ENCODE measurements at regions of chr6 and their contacts with region 1.

Region 1: DNA sequence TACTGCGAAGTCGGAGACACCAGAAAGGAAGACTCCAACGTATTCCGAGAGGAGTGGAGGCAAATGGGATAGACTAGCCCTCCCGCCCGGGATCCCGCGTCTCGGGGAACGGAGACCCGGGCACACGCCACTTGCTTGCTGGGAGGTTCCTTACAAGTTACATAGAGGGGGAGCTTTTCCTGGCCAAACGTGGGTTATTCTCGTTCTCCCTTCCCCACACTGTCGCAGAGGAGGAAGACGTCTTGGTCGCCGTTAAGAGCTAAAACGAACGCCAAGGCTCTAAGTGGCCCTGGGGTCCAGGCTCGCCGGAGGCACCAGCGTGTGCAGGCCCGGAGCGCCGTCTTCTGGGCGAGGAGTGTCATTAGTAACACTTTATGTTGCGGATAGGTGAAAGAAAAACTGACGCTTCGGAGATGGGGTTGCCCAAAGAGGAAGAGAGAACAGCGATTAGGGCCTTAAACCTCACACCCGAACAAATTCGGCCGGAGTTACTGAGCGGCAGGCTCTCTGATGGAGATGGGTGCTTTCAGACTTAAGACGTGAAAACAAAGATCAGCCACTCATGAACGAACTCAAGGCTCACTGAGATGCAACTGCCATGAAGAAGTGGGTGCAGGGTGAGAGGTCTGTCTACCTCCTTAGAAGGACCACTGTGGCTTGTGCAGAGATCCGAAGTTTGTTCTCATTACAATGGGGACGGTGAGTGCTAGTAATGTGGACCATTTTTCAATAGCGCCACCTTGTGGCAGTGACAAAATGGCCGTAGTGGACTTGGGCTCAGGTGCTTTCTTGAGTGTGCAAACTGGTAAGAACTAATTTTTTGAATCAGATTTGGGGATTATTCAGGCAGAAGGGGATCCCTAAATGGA is 11.7 kb upstream of the ZNF311 start:
- DNase-seq: peak; percentile 46 to 83
- ATAC-seq: peak; percentile 93 to 94
- H3K4me3 ChIP-seq: peak overlapping the region; percentile 85
- H3K27ac ChIP-seq: peak overlapping the region; percentile 63 to 83
- H3K4me1 ChIP-seq: no peaks in the 10 kb centered on the region
- CTCF ChIP-seq: peak; percentile 67; the same call in 2 of the 3 replicates
- EP300 ChIP-seq: no peak
- POLR2A ChIP-seq: no peak
- RAD21 ChIP-seq: peak; percentile 67 to 74

Region 2: GRCh38 chr6:28737750-28738395 is 278.9 kb before region 1 on chr6:
- CTCF ChIA-PET with region 1: no interaction called
- POLR2A ChIA-PET with region 1: no interaction called
- DNase-seq: no peak
- ATAC-seq: no peak
- H3K4me3 ChIP-seq: no peak overlapping the region
- H3K27ac ChIP-seq: no peak overlapping the region
- H3K4me1 ChIP-seq: peaks cover 6% of the 10 kb centered on the region; the same call in 1 of the 3 replicates
- CTCF ChIP-seq: no peak
- EP300 ChIP-seq: no peak
- POLR2A ChIP-seq: no peak
- RAD21 ChIP-seq: no peak

Region 3: DNA sequence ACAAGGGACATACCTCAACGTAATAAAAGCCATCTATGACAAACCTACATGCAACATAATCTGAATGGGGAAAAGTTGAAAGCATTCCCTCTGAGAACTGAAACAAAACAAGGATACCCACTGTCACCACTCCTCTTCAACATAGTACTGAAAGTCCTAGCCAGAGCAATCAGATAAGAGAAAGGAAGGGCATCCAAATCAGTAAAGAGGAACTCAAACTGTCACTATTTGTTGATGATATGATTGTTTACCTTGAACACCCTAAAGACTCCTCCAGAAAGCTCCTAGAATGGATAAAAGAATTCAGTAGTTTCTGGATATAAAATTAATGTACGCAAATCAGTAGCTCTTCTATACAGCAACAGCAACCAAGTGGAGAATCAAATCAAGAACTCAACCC is 51.1 kb before region 1 on chr6:
- CTCF ChIA-PET with region 1: no interaction called
- POLR2A ChIA-PET with region 1: no interaction called
- DNase-seq: no peak
- ATAC-seq: no peak
- H3K4me3 ChIP-seq: no peak overlapping the region
- H3K27ac ChIP-seq: no peak overlapping the region
- H3K4me1 ChIP-seq: no peaks in the 10 kb centered on the region
- CTCF ChIP-seq: no peak
- EP300 ChIP-seq: no peak
- POLR2A ChIP-seq: no peak
- RAD21 ChIP-seq: no peak

Region 4: GRCh38 chr6:28996844-28997510 is 19.8 kb before region 1 on chr6:
- CTCF ChIA-PET with region 1: interaction called, 13 read pairs
- POLR2A ChIA-PET with region 1: no interaction called
- DNase-seq: no peak
- ATAC-seq: no peak
- H3K4me3 ChIP-seq: no peak overlapping the region
- H3K27ac ChIP-seq: no peak overlapping the region
- H3K4me1 ChIP-seq: no peaks in the 10 kb centered on the region
- CTCF ChIP-seq: no peak
- EP300 ChIP-seq: no peak
- POLR2A ChIP-seq: no peak
- RAD21 ChIP-seq: no peak

Region 5: DNA sequence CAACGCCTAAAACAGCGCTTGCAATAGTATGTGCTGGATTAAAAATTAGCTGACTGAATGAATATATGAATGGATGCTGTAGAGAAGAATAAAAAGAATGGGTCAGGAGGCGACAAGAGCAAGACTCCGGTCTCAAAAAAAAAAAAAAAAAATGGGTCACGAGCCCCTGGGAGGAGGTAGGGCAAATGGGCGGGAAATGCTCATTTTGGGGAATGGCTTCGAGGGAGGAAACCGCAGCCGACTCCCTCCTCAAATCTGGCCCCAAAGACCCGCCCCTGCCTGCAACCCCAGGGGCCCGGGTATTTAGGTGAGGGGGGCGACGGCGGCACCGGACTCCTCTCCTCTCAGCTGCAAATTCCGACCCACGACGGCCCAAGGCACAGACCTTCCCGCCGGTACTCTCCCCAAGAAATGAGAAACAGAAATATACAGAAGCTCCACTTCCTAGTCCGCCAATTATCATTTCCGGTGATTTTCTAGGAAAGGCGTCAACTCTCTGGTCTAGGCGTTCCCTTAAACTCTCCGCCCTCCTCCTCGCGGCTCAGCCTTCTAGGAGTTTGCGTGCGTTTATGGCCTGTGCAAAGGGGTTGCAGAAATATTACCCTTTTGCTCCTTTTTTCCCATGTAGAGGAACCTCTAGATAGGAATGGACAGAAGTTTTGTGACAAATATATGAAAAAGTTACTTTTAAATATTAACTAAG is 11.5 kb before region 1 on chr6 and contains the start of gene ZNF311:
- CTCF ChIA-PET with region 1: interaction called, 10 read pairs
- POLR2A ChIA-PET with region 1: interaction called, 6 read pairs
- DNase-seq: peak; percentile 21 to 63
- ATAC-seq: peak; percentile 74 to 86; a peak in 5 of 6 replicates
- H3K4me3 ChIP-seq: peak within 1 kb of the TSS; percentile 41
- H3K27ac ChIP-seq: peak within 1 kb of the TSS; percentile 42 to 70; a peak in 3 of 6 replicates
- H3K4me1 ChIP-seq: peaks cover 8% of the 10 kb centered on the region; the same call in 2 of the 3 replicates
- CTCF ChIP-seq: no peak
- EP300 ChIP-seq: no peak
- POLR2A ChIP-seq: no peak
- RAD21 ChIP-seq: no peak
- polyA plus RNA-seq, gene ZNF311: 0.74 and 0.94 TPM in 2 replicates

Measured in A549 (cell line).